ENCODE measurements at regions of chr2 and their contacts with region 1.

Region 1: GRCh38 chr2:69499242-69499641 is 62.0 kb upstream of the NFU1 start:
- DNase-seq: no peak
- H3K4me3 ChIP-seq: no peak overlapping the region
- H3K27ac ChIP-seq: no peak overlapping the region
- H3K4me1 ChIP-seq: no peaks in the 10 kb centered on the region
- H3K27me3 ChIP-seq: no peaks in the 10 kb centered on the region
- CTCF ChIP-seq: no peak

Region 2: DNA sequence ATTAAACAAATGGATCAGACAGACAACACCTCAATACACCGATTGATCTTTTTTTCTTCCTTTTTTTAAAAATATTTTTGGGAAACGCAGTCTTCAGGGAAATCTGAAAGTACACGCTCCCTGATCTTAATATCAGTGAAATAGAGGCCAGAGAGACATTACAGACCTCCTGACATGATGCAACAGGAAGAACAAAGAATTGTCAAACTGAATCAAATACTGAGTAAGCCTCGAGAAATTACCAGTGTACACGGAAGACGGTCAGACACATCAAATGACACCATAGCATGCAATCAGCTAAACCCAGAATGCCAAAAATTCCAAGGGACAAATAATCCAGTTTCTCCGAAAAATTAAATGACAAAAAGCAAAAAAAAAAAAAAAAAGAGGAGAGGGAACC is 18.2 kb after region 1 on chr2:
- CTCF ChIA-PET with region 1: interaction called, 15 read pairs
- POLR2A ChIA-PET with region 1: no interaction called
- intact Hi-C with region 1: no loop called
- DNase-seq: no peak
- H3K4me3 ChIP-seq: no peak overlapping the region
- H3K27ac ChIP-seq: no peak overlapping the region
- H3K4me1 ChIP-seq: 0 out of 2 replicates have a peak, but pooled peaks cover 8% of the 10 kb centered on the region
- H3K27me3 ChIP-seq: no peaks in the 10 kb centered on the region
- CTCF ChIP-seq: no peak

Region 3: GRCh38 chr2:69683101-69683971 is 184.1 kb after region 1 on chr2:
- CTCF ChIA-PET with region 1: no interaction called
- POLR2A ChIA-PET with region 1: no interaction called
- intact Hi-C with region 1: no loop called
- DNase-seq: peak in 1 of 2 experiments; percentile 55
- H3K4me3 ChIP-seq: no peak overlapping the region
- H3K27ac ChIP-seq: no peak overlapping the region
- H3K4me1 ChIP-seq: 0 out of 2 replicates have a peak, but pooled peaks cover 9% of the 10 kb centered on the region
- H3K27me3 ChIP-seq: no peaks in the 10 kb centered on the region
- CTCF ChIP-seq: no peak

Region 4: GRCh38 chr2:69829256-69830046 is 330.2 kb after region 1 on chr2 and contains the start of gene GMCL1:
- CTCF ChIA-PET with region 1: interaction called, 10 read pairs
- POLR2A ChIA-PET with region 1: no interaction called
- intact Hi-C with region 1: no loop called
- DNase-seq: peak; percentile 86 to 97
- H3K4me3 ChIP-seq: peak within 1 kb of the TSS; percentile 82
- H3K27ac ChIP-seq: peak within 1 kb of the TSS; percentile 75
- H3K4me1 ChIP-seq: peaks cover 22% of the 10 kb centered on the region
- H3K27me3 ChIP-seq: no peaks in the 10 kb centered on the region
- CTCF ChIP-seq: no peak
- total RNA-seq, gene GMCL1: 15.1 and 17.4 TPM in 2 replicates